AG04450 (cell line): ENCODE measurements at regions of chr11 and their contacts with region 1.

Region 1: DNA sequence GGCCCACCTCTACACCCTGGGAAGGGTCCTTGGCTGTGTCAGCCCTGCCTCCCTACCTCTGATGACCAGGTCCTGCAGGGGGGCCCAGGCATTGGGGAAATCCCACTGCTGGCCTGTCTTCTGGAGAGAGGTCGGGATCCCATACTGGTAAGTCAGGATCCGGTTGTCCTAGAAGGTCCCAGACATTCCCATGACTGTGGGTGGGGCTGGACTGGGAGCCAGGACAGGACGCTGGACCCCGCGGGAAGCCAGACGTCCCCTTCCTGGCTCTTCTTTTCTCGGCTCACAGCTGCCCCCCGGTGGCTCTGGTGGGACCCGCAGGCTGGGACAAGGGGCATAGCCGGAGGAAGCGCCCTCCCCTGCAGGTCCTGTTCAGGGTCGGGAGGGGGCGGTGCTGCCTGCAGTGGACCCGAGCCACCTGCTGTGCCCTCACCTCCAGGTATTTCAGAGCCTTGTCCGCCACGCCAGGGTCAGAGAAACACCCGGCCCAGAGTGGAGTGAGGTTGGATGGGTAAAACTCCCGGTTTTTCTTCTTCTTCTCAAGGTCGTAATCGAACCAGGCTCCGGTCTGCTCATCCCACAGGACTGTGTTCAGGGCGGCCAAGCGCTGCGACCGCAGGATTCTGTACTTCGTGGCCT is 20.0 kb downstream of the TREH start:
- DNase-seq: peak; percentile 42
- H3K4me3 ChIP-seq: no peak overlapping the region
- H3K27ac ChIP-seq: peak overlapping the region; percentile 47
- H3K27me3 ChIP-seq: no peaks in the 10 kb centered on the region
- CTCF ChIP-seq: peak; percentile 90

Region 2: GRCh38 chr11:118319337-118319707 is 340.1 kb before region 1 on chr11:
- CTCF ChIA-PET with region 1: no interaction called
- POLR2A ChIA-PET with region 1: no interaction called
- DNase-seq: no peak
- H3K4me3 ChIP-seq: no peak overlapping the region
- H3K27ac ChIP-seq: no peak overlapping the region
- H3K27me3 ChIP-seq: peaks cover 8% of the 10 kb centered on the region
- CTCF ChIP-seq: no peak

Region 3: DNA sequence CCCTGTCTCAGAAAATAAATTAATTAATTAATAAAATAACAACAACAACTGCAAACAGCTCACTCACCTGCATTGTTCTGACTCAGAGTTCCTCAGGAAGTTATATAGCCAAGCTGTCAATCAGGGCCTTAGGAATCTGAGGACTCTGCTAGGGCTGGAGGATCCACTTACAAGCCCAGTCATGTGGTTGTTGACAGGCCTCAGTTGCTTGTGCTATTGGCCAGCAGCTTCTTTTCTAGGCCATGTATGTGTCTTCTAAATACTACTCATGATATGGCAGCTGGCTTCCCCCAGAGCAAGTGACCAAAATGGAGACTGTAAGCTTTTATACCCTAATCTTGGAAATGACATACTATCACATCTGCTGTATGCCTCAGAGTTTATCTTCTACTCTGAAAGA is 278.9 kb before region 1 on chr11:
- CTCF ChIA-PET with region 1: no interaction called
- POLR2A ChIA-PET with region 1: no interaction called
- DNase-seq: no peak
- H3K4me3 ChIP-seq: no peak overlapping the region
- H3K27ac ChIP-seq: no peak overlapping the region
- H3K27me3 ChIP-seq: no peaks in the 10 kb centered on the region
- CTCF ChIP-seq: no peak

Region 4: DNA sequence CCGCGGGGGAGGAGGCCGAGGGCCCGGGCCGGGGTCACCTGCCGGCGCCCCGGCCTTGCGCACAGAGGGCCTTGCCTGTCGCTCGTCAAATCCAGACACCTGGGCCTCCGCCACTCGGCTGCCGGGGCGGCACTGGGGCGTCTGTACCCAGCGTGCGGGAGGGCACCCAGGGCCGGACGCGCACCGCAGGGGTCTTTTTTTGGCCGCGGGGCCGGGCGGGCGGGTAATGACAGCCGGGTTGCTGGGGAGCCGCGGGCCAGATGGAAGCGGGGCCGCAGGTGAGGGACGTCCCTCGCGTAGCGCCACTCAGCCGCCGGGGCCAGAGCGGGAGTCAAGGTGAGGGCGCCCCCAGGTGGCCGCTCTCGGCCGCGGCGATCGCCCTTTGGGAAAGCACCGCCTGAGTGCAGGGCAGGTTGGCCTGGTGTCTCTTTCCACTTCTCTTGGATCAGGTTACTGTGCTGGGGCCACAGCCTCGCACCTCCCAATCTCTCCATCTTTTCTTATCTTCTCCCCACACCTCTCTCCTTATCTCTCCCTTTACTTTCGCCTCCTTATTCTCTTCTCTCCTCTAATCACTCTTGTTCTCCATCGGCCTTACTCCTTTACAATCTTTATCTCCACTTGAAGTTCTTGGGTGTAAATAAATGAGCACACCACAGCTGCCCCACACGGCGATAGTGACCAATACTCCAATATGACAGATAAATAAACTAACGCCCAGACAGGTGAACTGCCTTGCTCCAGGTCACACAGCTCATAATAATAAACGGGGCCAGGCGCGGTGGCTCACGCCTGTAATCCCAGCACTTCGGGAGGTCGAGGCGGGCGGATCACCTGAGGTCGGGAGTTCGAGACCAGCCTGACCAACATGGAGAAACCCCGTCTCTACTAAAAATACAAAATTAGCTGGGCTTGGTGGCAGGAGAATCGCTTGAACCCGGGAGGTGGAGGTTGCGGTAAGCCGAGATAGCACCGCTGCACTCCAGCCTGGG is 48.3 kb before region 1 on chr11:
- CTCF ChIA-PET with region 1: interaction called, 12 read pairs
- POLR2A ChIA-PET with region 1: interaction called, 3 read pairs
- DNase-seq: no peak
- H3K4me3 ChIP-seq: peak overlapping the region; percentile 83
- H3K27ac ChIP-seq: no peak overlapping the region
- H3K27me3 ChIP-seq: no peaks in the 10 kb centered on the region
- CTCF ChIP-seq: peak; percentile 77

Region 5: DNA sequence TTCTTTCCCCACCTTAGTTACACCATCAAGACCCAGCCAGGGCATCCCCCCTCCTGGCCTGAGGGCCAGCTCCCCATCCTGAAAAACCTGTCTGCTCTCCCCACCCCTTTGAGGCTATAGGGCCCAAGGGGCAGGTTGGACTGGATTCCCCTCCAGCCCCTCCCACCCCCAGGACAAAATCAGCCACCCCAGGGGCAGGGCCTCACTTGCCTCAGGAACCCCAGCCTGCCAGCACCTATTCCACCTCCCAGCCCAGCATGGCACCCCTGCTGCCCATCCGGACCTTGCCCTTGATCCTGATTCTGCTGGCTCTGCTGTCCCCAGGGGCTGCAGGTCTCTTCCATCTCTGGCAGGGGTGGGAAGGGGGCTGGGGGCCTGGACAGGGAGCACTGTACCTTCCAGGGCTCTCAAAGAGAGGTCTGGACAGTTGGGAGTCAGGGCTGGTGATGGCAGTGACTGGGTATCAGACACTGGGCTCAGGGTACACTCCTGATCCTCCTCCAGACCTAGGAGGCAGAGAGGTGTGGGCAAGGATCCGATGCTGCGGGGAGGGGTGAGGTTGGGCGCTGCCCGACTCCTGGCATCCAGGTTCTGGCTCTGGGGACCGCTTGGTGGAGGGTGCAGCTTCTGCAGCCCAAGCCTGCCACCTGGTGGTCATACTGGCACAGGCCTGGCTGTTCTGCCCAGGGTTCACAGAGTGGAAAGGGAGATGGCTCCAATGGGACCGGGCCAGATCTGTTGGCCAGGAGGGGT is 296.8 kb after region 1 on chr11 and contains the start of gene UPK2:
- CTCF ChIA-PET with region 1: interaction called, 11 read pairs
- POLR2A ChIA-PET with region 1: no interaction called
- DNase-seq: peak; percentile 53
- H3K4me3 ChIP-seq: no peak within 1 kb of the TSS
- H3K27ac ChIP-seq: no peak within 1 kb of the TSS
- H3K27me3 ChIP-seq: peaks cover 39% of the 10 kb centered on the region
- CTCF ChIP-seq: peak; percentile 93
- polyA plus RNA-seq, gene UPK2: 0.20 TPM in 1 of 2 replicates, not detected in the other